H1 (cell line): ENCODE measurements at regions of chr16 and their contacts with region 1.

Region 1: GRCh38 chr16:31179747-31180459 is at the start of gene FUS:
- DNase-seq: peak in 1 of 2 experiments; percentile 94
- H3K4me3 ChIP-seq: peak within 1 kb of the TSS; percentile 69 to 96 (median 86)
- H3K27ac ChIP-seq: peak within 1 kb of the TSS; percentile 99
- H3K4me1 ChIP-seq: peaks cover 0 to 7% (median 2%) of the 10 kb centered on the region in 4 experiments; a peak in 5 of 7 replicates
- H3K27me3 ChIP-seq: no peaks in the 10 kb centered on the region
- CTCF ChIP-seq: no peak
- EP300 ChIP-seq: peak in 1 of 2 experiments; percentile 99; a peak in 2 of 3 replicates
- POLR2A ChIP-seq: peak; percentile 100
- RAD21 ChIP-seq: no peak
- total RNA-seq, gene FUS: 685 and 686 TPM in 2 replicates

Region 2: DNA sequence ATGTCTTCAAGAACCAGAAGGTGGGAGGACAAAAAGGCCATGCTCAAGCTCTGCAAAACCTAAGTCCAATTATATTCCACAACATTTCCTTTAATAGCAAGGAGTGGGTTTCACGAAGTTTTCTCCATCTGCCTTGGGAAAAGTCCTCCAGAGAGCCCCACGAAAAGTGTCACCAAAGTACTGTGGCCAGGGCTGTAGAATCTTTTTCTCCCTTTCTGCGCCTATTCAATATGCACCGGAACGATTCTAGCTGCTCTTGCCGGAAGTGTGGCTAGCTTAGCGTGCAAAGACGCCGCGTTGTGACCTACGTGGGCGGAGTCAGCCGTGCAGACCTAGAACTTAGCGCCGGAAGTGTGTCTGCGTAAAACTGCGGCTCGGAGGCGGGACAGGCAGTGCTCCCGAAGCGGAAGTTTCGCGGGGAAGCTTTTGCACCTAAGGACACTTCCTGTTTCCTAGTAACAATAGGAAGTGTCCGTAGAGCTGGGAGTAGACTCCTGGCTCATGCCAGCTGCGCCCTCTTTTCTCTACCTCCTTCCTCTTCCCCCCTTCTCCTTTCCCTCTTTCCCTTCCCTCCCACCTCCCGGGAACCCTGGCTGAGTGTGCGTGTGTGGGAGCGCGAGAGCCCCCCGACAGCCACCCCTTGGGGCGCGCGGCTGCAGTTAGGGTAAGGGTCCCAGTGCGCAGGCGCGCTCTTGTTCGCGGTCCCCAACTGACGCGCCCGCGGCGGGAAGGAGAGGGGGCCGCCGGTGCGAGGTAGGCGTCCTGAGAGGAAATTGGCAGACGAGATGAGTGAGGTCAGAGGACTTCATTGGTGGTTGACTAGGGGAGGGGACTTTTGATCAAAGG is 105.7 kb before region 1 on chr16 and contains the starts of genes ZNF646 and ZNF668:
- CTCF ChIA-PET with region 1: no interaction called
- POLR2A ChIA-PET with region 1: interaction called, 15 read pairs
- DNase-seq: peak; percentile 89 to 97
- H3K4me3 ChIP-seq: peak within 1 kb of the TSS; percentile 89 to 98 (median 90)
- H3K27ac ChIP-seq: peak within 1 kb of the TSS; percentile 82
- H3K4me1 ChIP-seq: peaks cover 0 to 1% (median 0%) of the 10 kb centered on the region in 4 experiments; a peak in 2 of 7 replicates
- H3K27me3 ChIP-seq: no peaks in the 10 kb centered on the region
- CTCF ChIP-seq: no peak
- EP300 ChIP-seq: no peak; a peak in 1 of 3 replicates
- POLR2A ChIP-seq: peak; percentile 72 to 92
- RAD21 ChIP-seq: no peak
- total RNA-seq, gene ZNF646: 25.0 TPM in 2 replicates
- total RNA-seq, gene ZNF668: 13.6 and 14.0 TPM in 2 replicates

Region 3: DNA sequence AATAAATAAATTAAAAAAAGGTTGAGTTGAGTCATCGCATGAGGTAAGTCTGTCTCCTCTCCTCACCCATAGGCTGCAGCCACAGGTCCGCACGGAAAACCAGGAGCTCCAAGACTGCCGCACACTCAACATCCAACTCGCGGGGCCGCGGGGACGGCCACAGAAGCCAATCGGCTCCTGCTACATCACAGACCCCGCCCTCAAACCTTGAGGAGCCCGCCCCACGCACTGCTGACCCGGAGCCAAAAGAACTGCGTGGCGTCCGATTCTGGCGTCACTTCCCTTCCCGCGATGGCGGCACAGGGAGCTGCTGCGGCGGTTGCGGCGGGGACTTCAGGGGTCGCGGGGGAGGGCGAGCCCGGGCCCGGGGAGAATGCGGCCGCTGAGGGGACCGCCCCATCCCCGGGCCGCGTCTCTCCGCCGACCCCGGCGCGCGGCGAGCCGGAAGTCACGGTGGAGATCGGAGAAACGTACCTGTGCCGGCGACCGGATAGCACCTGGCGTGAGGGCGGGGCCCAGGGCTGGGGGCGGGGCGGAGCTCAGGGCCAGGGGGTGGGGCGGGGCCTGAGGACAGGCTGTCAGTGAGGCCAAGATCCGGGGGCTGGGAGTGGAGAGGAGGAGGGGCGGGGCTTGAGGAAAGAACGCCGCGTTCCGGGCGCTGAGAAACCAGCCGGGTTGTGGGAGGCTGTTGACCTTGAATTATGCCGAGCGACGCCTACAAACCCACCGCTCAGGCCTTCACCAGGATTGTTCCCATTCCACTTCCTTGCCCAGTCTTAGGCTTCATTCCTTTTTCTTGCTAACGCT is 62.3 kb before region 1 on chr16 and contains the start of gene KAT8:
- CTCF ChIA-PET with region 1: no interaction called
- POLR2A ChIA-PET with region 1: interaction called, 24 read pairs
- DNase-seq: peak; percentile 90 to 94
- H3K4me3 ChIP-seq: peak within 1 kb of the TSS; percentile 70 to 96 (median 90)
- H3K27ac ChIP-seq: peak within 1 kb of the TSS; percentile 90
- H3K4me1 ChIP-seq: peaks cover 0 to 4% (median 2%) of the 10 kb centered on the region in 4 experiments; a peak in 3 of 7 replicates
- H3K27me3 ChIP-seq: no peaks in the 10 kb centered on the region
- CTCF ChIP-seq: peak in 1 of 3 experiments; percentile 4; a peak in 1 of 4 replicates
- EP300 ChIP-seq: no peak
- POLR2A ChIP-seq: peak; percentile 62 to 95
- RAD21 ChIP-seq: peak in 1 of 2 experiments; percentile 13; a peak in 1 of 4 replicates
- total RNA-seq, gene KAT8: 61.6 and 68.7 TPM in 2 replicates

Region 4: DNA sequence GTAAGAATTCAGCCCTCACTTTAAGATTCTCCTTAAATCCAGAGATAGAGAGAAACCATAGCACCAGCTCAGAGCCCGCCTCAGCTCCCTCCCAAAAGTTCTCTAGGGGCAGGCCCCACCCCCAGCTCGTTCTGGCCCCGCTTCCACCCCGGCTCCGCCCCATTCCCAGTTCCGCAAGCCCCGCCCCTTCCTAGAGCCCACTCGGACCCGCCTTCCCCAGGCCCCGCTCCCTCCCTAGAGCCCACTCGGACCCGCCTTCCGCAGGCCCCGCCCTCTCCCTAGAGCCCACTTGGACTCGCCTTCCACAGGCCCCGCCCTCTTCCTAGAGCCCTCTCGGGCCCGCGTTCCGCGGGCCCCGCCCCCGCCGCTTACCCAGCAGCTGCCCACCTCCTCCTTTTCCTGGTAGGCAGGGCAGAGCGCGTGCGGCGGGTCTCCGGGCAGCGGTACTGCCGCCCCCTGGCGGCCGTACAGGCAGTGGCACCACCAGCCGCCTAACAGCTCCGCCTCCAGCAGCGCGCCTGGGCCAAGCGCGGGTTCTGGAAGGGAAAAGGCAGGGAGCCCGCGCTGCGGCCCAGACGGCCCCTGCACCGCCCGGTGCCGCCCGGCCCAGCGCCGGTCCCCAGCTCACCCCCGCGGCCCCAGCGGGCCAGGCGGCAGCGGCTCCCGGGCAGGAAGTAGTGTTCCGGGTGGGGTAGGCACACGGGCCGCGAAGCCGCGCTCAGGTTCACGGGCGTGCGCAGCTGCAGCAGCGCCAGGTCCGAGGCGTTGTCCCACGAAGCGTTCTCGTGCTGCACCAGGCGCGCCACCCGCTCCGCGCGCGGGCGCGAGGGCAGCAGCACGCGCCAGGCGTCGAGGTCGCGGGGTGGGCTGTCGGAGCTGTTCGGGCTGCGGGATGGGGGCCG is 37.5 kb before region 1 on chr16:
- CTCF ChIA-PET with region 1: interaction called, 3 read pairs
- POLR2A ChIA-PET with region 1: interaction called, 85 read pairs
- DNase-seq: peak; percentile 98 to 99
- H3K4me3 ChIP-seq: peak overlapping the region; percentile 10 to 54 (median 24); a peak in 7 of 8 replicates
- H3K27ac ChIP-seq: peak overlapping the region; percentile 48; the same call in 1 of the 2 replicates
- H3K4me1 ChIP-seq: peaks cover 5 to 26% (median 22%) of the 10 kb centered on the region in 4 experiments
- H3K27me3 ChIP-seq: peaks cover 1 to 19% (median 12%) of the 10 kb centered on the region in 4 experiments
- CTCF ChIP-seq: peak; percentile 82 to 95 (median 87)
- EP300 ChIP-seq: 0 out of 3 replicates have a peak, but pooled peaks of 1 of the 2 experiments have one; percentile 45
- POLR2A ChIP-seq: no peak
- RAD21 ChIP-seq: peak; percentile 77 to 85

Region 5: DNA sequence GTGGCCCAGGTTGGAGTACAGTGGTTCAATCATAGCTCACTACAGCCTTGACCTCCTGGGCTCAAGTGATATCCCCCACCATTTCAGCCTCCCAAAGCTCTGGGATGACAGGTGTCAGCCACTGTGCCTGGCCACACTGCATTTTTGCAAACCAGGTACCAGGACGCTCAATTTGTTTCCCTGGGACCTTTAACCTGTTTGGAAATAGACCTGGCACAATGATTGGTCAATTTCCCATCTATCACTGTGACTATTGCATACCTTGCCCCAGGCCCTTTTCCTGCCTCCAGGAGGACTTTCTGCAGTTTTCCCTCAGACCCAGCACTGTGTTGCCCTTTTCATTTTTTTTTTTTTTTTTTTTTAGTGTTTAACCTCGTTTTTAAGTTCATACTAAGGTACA is 11.1 kb before region 1 on chr16:
- CTCF ChIA-PET with region 1: interaction called, 4 read pairs
- POLR2A ChIA-PET with region 1: interaction called, 62 read pairs
- DNase-seq: no peak
- H3K4me3 ChIP-seq: no peak overlapping the region
- H3K27ac ChIP-seq: no peak overlapping the region
- H3K4me1 ChIP-seq: peaks cover 0 to 3% (median 0%) of the 10 kb centered on the region in 4 experiments; a peak in 1 of 7 replicates
- H3K27me3 ChIP-seq: no peaks in the 10 kb centered on the region; a peak in 1 of 7 replicates
- CTCF ChIP-seq: no peak
- EP300 ChIP-seq: no peak
- POLR2A ChIP-seq: no peak
- RAD21 ChIP-seq: no peak

Region 6: DNA sequence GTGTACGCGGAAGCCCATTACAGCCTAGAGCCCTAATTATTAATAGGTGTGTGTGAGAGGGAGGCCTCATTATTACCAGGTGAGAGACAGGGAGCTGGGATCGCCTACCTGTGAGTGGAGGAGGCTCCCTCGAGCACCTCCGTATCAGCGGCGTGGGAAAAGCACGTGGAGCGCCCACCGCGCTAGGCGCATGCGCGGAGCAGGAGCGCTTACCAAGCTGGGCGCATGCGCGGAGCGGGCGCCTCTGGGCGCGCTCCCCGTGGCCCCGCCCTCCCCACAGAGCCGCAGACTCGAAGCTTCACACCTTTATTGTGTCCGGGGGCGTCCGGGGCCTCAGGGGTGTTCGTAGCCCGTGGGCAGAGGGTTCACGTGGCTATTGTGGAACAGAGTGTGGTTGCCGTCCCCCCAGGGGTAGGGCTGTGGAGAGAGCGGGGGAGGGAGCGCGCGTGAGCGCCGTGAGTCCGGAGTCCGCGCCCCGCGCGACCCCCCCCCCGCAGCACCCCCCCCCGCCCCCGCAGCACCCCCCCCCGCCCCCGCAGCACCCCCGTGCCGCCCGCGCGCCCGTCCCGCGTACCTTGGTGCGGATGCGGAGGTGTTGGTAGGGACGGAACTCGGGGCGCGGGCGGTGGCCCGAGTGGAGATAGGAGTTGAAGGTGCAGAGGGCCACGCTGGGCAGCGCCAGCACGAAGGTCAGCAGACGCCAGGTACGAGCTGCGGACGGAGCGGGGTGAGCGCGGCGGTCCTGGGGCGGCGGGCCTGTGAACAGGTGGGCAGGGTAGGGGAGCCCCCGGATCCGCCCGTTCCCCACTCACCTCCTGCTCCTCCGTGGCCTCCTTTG is 247.8 kb after region 1 on chr16:
- CTCF ChIA-PET with region 1: no interaction called
- POLR2A ChIA-PET with region 1: interaction called, 10 read pairs
- DNase-seq: peak in 1 of 2 experiments; percentile 61
- H3K4me3 ChIP-seq: peak overlapping the region in 3 of 4 experiments; percentile 2 to 50 (median 15); a peak in 5 of 8 replicates
- H3K27ac ChIP-seq: no peak overlapping the region
- H3K4me1 ChIP-seq: no peaks in the 10 kb centered on the region; a peak in 2 of 7 replicates
- H3K27me3 ChIP-seq: peaks cover 5 to 25% (median 24%) of the 10 kb centered on the region in 4 experiments
- CTCF ChIP-seq: no peak
- EP300 ChIP-seq: no peak
- POLR2A ChIP-seq: no peak
- RAD21 ChIP-seq: no peak